MCF 10A (cell line): ENCODE measurements at regions of chr7 and their contacts with region 1.

Region 1: DNA sequence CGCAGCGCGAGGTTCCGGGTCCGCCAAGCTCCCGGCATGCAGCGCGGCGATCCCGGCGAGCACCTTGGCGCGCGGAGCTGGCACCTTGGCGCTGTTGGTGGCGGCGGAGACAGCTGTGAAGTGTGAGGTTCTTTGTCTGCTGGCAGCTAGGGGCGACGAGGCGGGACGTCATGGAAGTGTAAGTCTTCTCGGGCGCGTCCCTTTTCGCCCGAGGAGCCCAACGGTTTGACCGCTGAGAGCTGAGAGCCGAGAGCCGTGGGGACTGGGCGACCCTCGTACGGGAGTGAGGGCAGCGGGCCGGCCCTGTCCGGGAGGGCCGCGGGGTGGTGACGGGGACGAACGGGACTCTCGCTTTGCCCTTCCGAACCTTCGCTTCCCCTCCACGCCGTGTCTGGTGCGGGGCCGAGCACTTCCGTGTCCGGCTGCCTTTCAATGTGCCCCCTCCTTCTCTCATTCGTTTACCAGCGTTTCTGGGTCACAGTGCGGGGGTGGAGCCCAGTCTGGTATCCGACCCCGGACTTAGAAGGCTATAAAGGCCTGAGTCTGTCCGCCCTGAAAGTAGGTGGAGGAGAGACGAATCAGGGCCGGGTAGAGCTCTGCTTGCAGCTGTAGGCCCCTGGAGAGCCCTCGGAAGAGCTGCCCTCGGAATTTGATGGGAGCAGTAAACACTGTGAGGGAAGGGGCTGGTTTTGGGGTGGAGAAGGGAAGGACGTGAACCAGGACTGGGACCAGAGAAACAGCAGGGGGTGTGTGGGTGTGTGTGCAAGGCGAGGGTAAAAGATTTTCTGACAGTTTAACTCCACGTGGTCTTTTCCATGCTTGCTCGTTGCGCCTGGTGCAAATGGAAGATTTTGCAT is at the start of gene CRCP:
- DNase-seq: peak; percentile 77
- H3K4me3 Mint-ChIP-seq: peak within 1 kb of the TSS; percentile 90
- H3K27ac Mint-ChIP-seq: peak within 1 kb of the TSS; percentile 97
- H3K4me1 Mint-ChIP-seq: peaks cover 34% of the 10 kb centered on the region
- H3K27me3 Mint-ChIP-seq: no peaks in the 10 kb centered on the region
- CTCF ChIP-seq: peak; percentile 18
- total RNA-seq, gene CRCP: 27.5 and 39.8 TPM in 2 replicates

Region 2: GRCh38 chr7:66033471-66034385 is 81.3 kb before region 1 on chr7:
- CTCF ChIA-PET with region 1: interaction called, 14 read pairs
- POLR2A ChIA-PET with region 1: interaction called, 15 read pairs
- intact Hi-C with region 1: loop called (anchors 5 kb)
- DNase-seq: no peak
- H3K4me3 Mint-ChIP-seq: no peak overlapping the region
- H3K27ac Mint-ChIP-seq: no peak overlapping the region
- H3K4me1 Mint-ChIP-seq: no peaks in the 10 kb centered on the region
- H3K27me3 Mint-ChIP-seq: no peaks in the 10 kb centered on the region
- CTCF ChIP-seq: no peak

Region 3: GRCh38 chr7:66075590-66076461 is 39.2 kb before region 1 on chr7 and contains the start of gene ASL:
- CTCF ChIA-PET with region 1: no interaction called
- POLR2A ChIA-PET with region 1: interaction called, 11 read pairs
- intact Hi-C with region 1: no loop called
- DNase-seq: peak; percentile 93
- H3K4me3 Mint-ChIP-seq: peak within 1 kb of the TSS; percentile 84
- H3K27ac Mint-ChIP-seq: peak within 1 kb of the TSS; percentile 23
- H3K4me1 Mint-ChIP-seq: no peaks in the 10 kb centered on the region
- H3K27me3 Mint-ChIP-seq: no peaks in the 10 kb centered on the region
- CTCF ChIP-seq: no peak
- total RNA-seq, gene ASL: 53.6 and 56.5 TPM in 2 replicates

Region 4: DNA sequence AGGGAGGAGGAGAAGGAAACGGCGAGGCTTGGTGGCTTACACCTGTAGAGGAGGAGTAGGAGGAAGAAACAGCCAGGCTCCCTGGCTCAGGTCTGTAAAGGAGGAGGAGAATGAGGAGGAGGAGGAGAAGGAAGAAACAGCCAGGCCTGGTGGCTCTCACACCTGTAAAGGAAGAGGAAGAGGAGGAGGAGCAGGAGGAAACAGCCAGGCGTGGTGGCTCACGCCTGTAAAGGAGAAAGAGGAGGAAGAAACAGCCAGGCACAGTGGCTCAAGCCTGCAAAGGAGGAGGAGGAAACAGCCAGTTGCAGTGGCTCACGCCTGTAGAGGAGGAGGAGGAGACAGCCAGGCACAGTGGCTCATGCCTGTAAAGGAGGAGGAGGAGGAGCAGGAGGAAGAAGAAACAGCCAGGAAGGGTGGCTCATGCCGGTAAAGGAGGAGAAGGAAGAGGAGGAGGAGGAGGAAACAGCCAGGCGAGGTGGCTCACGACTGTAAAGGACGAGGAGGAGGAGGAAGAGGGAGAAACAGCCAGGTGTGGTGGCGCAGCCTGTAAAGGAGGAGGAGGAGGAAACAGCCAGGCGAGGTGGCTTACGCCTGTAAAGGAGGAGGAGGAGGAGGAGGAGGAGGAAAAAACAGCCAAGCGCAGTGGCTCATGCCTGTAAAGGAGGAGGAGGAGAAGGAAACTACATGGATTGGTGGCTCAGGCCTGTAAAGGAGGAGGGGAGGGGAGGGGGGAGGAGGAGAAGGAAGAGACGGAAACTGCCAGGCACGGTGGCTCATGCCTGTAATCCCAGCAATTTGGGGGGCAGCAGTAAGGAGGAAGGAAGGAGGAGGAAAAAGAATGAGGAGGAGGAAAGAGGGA is 15.2 kb before region 1 on chr7:
- CTCF ChIA-PET with region 1: interaction called, 4 read pairs
- POLR2A ChIA-PET with region 1: interaction called, 17 read pairs
- intact Hi-C with region 1: no loop called
- DNase-seq: peak; percentile 95
- H3K4me3 Mint-ChIP-seq: peak overlapping the region; percentile 92
- H3K27ac Mint-ChIP-seq: peak overlapping the region; percentile 67
- H3K4me1 Mint-ChIP-seq: peaks cover 18% of the 10 kb centered on the region
- H3K27me3 Mint-ChIP-seq: no peaks in the 10 kb centered on the region
- CTCF ChIP-seq: no peak

Region 5: GRCh38 chr7:66442385-66442784 is 327.4 kb after region 1 on chr7:
- CTCF ChIA-PET with region 1: no interaction called
- POLR2A ChIA-PET with region 1: no interaction called
- intact Hi-C with region 1: no loop called
- DNase-seq: no peak
- H3K4me3 Mint-ChIP-seq: no peak overlapping the region
- H3K27ac Mint-ChIP-seq: no peak overlapping the region
- H3K4me1 Mint-ChIP-seq: no peaks in the 10 kb centered on the region
- H3K27me3 Mint-ChIP-seq: no peaks in the 10 kb centered on the region
- CTCF ChIP-seq: no peak

Region 6: GRCh38 chr7:66493235-66494181 is 378.5 kb after region 1 on chr7:
- CTCF ChIA-PET with region 1: interaction called, 4 read pairs
- POLR2A ChIA-PET with region 1: interaction called, 15 read pairs
- intact Hi-C with region 1: no loop called
- DNase-seq: peak; percentile 97
- H3K4me3 Mint-ChIP-seq: peak overlapping the region; percentile 85
- H3K27ac Mint-ChIP-seq: peak overlapping the region; percentile 96
- H3K4me1 Mint-ChIP-seq: no peaks in the 10 kb centered on the region
- H3K27me3 Mint-ChIP-seq: no peaks in the 10 kb centered on the region
- CTCF ChIP-seq: peak; percentile 20

Region 7: GRCh38 chr7:66505531-66506451 is 390.8 kb after region 1 on chr7:
- CTCF ChIA-PET with region 1: no interaction called
- POLR2A ChIA-PET with region 1: no interaction called
- intact Hi-C with region 1: no loop called
- DNase-seq: no peak
- H3K4me3 Mint-ChIP-seq: no peak overlapping the region
- H3K27ac Mint-ChIP-seq: no peak overlapping the region
- H3K4me1 Mint-ChIP-seq: no peaks in the 10 kb centered on the region
- H3K27me3 Mint-ChIP-seq: peaks cover 12% of the 10 kb centered on the region
- CTCF ChIP-seq: no peak